Endothelial cell of umbilical vein (primary cell): ENCODE measurements at regions of chr4 and their contacts with region 1.

Region 1: GRCh38 chr4:140359562-140360427 is 13.7 kb upstream of the SCOC start:
- DNase-seq: peak; percentile 86
- H3K4me3 ChIP-seq: no peak overlapping the region
- H3K27ac ChIP-seq: no peak overlapping the region
- H3K4me1 ChIP-seq: peaks cover 6% of the 10 kb centered on the region
- H3K27me3 ChIP-seq: no peaks in the 10 kb centered on the region
- CTCF ChIP-seq: peak; percentile 77 to 89
- POLR2A ChIP-seq: no peak

Region 2: GRCh38 chr4:139734875-139735380 is 624.9 kb before region 1 on chr4:
- CTCF ChIA-PET with region 1: interaction called, 46 read pairs
- POLR2A ChIA-PET with region 1: no interaction called
- dilution Hi-C with region 1: no loop called
- intact Hi-C with region 1: loop called (anchors 1 kb)
- DNase-seq: peak; percentile 94
- H3K4me3 ChIP-seq: peak overlapping the region in 2 of 3 experiments; percentile 18 to 34
- H3K27ac ChIP-seq: peak overlapping the region; percentile 14
- H3K4me1 ChIP-seq: peaks cover 12% of the 10 kb centered on the region
- H3K27me3 ChIP-seq: no peaks in the 10 kb centered on the region
- CTCF ChIP-seq: peak; percentile 66 to 88
- POLR2A ChIP-seq: no peak

Region 3: DNA sequence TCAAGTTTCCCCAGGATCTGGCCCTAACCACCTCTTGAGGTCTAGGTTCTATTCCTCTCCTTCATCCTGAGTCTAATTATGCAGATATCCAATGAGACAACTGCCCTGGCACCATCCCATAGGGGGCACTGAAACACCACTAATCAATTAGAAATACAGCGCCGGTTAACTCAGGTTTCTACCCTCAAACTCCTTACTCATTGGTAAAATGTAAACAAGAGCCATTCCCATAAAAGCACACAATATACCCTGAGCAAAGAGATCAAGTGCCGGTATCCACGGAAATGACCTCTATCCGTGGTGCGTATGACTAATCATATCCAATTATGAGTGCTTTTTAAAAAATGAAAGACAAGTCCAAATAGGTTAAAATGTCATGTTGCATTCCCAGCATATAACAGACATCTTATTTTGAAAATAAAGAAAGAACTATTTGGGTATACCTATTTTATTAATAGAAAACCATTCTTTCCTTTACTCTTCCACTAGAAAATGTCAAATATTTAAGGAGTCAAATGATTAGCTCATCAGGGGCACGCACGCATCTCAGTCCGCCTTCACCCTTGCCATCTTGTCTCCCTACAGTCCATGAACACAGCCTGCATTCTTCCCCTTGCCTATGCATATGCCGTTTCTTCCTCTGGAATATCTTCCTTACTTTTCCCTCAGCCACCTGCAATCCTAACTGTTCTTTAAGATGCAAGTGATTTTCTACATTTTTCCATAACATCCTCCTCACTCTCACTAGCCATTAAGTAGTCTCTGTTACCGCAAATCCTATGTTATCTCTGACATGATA is 346.9 kb before region 1 on chr4:
- CTCF ChIA-PET with region 1: interaction called, 38 read pairs
- POLR2A ChIA-PET with region 1: no interaction called
- dilution Hi-C with region 1: no loop called
- intact Hi-C with region 1: loop called (anchors 1 kb)
- DNase-seq: peak; percentile 92
- H3K4me3 ChIP-seq: no peak overlapping the region
- H3K27ac ChIP-seq: peak overlapping the region; percentile 49
- H3K4me1 ChIP-seq: peaks cover 17% of the 10 kb centered on the region
- H3K27me3 ChIP-seq: no peaks in the 10 kb centered on the region
- CTCF ChIP-seq: peak; percentile 62 to 74
- POLR2A ChIP-seq: no peak

Region 4: GRCh38 chr4:140343303-140343702 is 16.5 kb before region 1 on chr4:
- CTCF ChIA-PET with region 1: interaction called, 37 read pairs
- POLR2A ChIA-PET with region 1: no interaction called
- dilution Hi-C with region 1: no loop called
- intact Hi-C with region 1: no loop called
- DNase-seq: peak; percentile 63
- H3K4me3 ChIP-seq: no peak overlapping the region
- H3K27ac ChIP-seq: no peak overlapping the region
- H3K4me1 ChIP-seq: peaks cover 9% of the 10 kb centered on the region
- H3K27me3 ChIP-seq: peaks cover 8 to 11% of the 10 kb centered on the region in 2 experiments
- CTCF ChIP-seq: no peak
- POLR2A ChIP-seq: no peak

Region 5: DNA sequence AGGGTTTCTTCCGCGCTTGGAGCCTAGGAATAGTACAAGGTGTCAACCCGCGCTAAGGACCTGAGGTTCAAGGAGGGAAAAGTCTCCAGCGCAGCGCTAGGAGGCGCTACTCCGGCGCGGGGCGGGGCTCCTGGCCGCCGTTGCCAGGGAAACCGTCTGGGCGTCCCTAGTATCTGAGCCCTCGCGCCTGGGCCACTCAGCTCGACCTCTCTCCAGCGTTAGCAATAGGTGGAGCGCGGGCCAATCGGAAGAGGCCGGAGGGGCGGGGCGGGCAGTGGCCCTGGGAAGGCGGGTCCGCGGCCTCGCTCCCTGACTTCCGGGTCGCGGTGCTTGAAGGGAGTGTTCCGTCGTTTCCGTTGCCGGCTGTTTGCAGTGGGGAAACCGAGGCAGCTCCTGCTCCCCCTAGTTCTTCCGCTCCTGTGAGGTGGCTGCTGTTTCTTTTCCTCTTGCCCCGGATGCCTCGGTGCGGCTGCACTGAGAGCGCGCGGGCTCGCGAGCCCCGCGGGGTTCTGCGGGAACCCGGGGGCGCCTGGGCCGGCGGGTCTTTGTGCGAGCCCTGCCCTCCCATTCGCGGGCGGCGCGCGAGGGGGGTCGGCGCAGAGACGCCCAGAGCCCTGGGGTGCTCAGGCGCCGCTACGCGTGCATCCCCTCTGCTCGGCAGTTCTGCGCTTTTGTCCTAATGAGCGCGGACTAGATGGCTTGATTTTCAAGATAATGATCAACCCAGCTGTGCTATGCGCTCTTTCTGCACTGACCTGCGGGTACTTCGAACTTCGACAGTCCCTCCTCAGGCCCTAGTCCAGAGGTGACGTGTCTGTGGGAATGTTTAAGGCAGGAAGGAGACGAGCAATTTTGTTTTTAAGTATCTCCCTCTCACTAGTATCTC is 164.3 kb after region 1 on chr4 and contains the start of gene ELMOD2:
- CTCF ChIA-PET with region 1: interaction called, 10 read pairs
- POLR2A ChIA-PET with region 1: no interaction called
- dilution Hi-C with region 1: no loop called
- intact Hi-C with region 1: no loop called
- DNase-seq: peak; percentile 97
- H3K4me3 ChIP-seq: peak within 1 kb of the TSS; percentile 38 to 87 (median 83)
- H3K27ac ChIP-seq: peak within 1 kb of the TSS; percentile 21
- H3K4me1 ChIP-seq: peaks cover 14% of the 10 kb centered on the region
- H3K27me3 ChIP-seq: peaks cover 0 to 2% of the 10 kb centered on the region in 2 experiments
- CTCF ChIP-seq: peak; percentile 97 to 99
- POLR2A ChIP-seq: peak; percentile 80
- total RNA-seq, gene ELMOD2: 20.5 and 23.6 TPM in 2 replicates

Region 6: GRCh38 chr4:140609548-140610425 is 250.0 kb after region 1 on chr4:
- CTCF ChIA-PET with region 1: interaction called, 116 read pairs
- POLR2A ChIA-PET with region 1: no interaction called
- dilution Hi-C with region 1: no loop called
- intact Hi-C with region 1: loop called (anchors 1 kb)
- DNase-seq: peak; percentile 75
- H3K4me3 ChIP-seq: no peak overlapping the region
- H3K27ac ChIP-seq: no peak overlapping the region
- H3K4me1 ChIP-seq: peaks cover 3% of the 10 kb centered on the region
- H3K27me3 ChIP-seq: peaks cover 0 to 11% of the 10 kb centered on the region in 2 experiments
- CTCF ChIP-seq: peak; percentile 20 to 36
- POLR2A ChIP-seq: no peak

Region 7: GRCh38 chr4:140906993-140907962 is 547.5 kb after region 1 on chr4:
- CTCF ChIA-PET with region 1: no interaction called
- POLR2A ChIA-PET with region 1: no interaction called
- dilution Hi-C with region 1: no loop called
- intact Hi-C with region 1: no loop called
- DNase-seq: no peak
- H3K4me3 ChIP-seq: no peak overlapping the region
- H3K27ac ChIP-seq: no peak overlapping the region
- H3K4me1 ChIP-seq: no peaks in the 10 kb centered on the region
- H3K27me3 ChIP-seq: peaks cover 0 to 1% of the 10 kb centered on the region in 2 experiments
- CTCF ChIP-seq: no peak
- POLR2A ChIP-seq: no peak